Left lung (tissue), 14 donors: ENCODE measurements at regions of chr16 and their contacts with region 1.

Region 1: DNA sequence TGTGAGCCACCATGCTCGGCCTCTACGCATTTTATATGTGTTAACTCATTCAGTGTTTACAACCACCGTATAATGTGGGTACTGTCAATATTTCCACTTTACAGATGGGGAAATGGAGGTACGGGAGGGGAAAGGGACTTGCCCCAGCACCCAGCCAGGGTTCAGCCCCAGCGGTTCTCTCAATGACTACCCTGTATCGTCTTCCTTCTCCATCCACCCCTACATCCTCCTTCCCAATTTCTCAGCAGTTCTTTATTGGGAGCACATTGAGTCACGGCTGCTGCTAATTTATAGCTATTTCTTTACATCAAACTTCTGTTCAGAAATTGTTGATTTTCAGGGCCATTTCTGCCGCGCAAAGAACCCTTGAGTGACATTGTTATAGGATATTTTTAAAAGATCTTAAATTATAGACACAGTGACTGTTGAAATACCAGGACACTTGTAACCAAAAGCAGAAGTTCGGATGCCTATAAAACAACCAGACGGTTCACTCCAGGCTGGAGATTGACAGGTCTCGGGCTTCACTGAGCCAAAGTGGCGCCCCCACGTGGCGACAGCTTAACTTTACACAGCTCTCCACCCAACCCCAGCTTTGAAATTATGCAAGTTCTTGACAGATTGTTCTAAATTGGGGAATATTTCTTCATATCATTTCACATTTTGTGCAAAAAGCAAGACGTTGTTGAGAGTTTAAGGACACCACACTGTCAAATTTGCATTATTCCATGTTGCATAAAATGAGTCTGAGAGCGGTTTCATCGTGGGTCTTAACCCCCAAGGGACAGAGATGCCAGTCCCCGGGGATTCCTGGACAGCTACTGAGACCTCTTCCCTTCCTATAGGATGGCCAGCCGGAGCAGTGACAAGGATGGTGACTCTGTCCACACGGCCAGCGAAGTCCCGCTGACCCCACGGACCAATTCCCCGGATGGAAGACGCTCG is 11.8 kb downstream of the SYT17 start:
- DNase-seq: peak in 3 of 4 donors; percentile 48 to 87 (median 71)
- ATAC-seq: peak; percentile 73
- H3K4me3 ChIP-seq: no peak overlapping the region
- H3K27ac ChIP-seq: peak overlapping the region in 1 of 2 donors; percentile 4
- H3K4me1 ChIP-seq: peaks cover 16 to 35% of the 10 kb centered on the region in 2 donors
- H3K27me3 ChIP-seq: no peaks in the 10 kb centered on the region
- CTCF ChIP-seq: peak; percentile 57 to 76

Region 2: DNA sequence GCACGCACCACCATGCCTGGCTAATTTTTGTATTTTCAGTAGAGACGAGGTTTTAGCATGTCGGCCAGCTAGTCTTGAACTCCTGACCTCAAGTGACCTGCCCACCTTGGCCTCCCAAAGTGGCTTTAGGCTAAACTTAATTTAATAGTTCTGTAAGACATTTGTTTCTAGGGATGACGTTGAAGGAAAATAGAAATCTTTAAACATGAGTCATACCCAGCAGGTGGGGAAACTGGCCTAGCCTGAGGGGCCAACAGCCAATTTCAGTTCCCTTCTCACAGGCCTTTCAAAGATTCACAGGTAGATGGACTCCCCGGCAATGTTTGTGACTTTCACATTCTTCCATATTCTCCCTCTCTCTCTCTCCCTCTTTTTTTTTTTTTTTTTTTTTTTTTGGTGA is 84.2 kb before region 1 on chr16:
- intact Hi-C with region 1: no loop called
- DNase-seq: no peak
- ATAC-seq: no peak
- H3K4me3 ChIP-seq: no peak overlapping the region
- H3K27ac ChIP-seq: no peak overlapping the region
- H3K4me1 ChIP-seq: peaks cover 0 to 11% of the 10 kb centered on the region in 2 donors
- H3K27me3 ChIP-seq: no peaks in the 10 kb centered on the region
- CTCF ChIP-seq: no peak

Region 3: DNA sequence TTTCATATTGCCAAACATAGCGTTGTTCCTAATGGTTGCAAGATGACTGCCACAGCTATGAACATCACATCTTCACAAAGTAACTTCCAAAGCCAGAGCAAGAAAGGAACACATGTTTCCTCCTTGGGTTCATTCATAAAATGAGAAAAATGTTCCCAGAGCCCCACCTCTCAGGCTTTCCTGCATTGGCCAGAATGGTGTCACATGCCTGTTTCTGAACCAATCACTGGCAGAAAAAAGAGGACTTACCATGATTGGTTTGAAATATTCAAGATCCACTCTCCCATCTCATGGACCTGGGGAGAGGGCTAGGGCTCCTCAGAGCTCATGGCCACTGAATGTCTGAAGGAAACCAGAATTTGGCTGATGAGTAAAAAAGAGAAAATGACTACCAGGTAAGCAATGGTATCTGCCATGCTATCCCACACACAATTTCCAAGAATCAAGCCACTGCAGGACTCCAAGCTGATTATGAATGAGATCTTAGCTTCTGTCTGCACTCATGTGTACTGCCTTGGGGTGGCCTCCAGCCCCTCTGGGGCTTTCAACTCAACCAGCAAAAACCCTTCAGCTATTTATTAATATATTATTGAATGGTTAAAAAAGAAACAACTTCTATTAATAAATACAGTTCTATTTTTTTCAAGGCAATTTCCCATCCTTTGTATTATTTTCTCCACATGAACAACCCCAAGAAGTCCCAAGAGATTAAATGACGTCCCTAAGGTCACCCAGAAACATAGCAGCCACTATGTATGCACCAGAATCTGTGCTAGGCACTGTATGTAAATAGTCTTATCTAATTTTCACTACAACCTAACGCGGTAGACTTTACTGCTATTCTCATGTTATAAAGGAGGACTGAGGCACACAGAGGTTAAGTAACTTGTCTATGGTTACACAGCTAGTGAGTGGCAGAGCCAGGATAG is 176.5 kb after region 1 on chr16:
- intact Hi-C with region 1: loop called in 1 of 2 experiments (anchors 10 kb)
- DNase-seq: no peak
- ATAC-seq: no peak
- H3K4me3 ChIP-seq: no peak overlapping the region
- H3K27ac ChIP-seq: no peak overlapping the region
- H3K4me1 ChIP-seq: no peaks in the 10 kb centered on the region
- H3K27me3 ChIP-seq: no peaks in the 10 kb centered on the region
- CTCF ChIP-seq: no peak

Region 4: GRCh38 chr16:19437280-19437679 is 257.5 kb after region 1 on chr16:
- intact Hi-C with region 1: no loop called
- DNase-seq: no peak
- ATAC-seq: peak; percentile 58
- H3K4me3 ChIP-seq: no peak overlapping the region
- H3K27ac ChIP-seq: peak overlapping the region in 1 of 2 donors; percentile 7
- H3K4me1 ChIP-seq: peaks cover 4 to 8% of the 10 kb centered on the region in 2 donors
- H3K27me3 ChIP-seq: no peaks in the 10 kb centered on the region
- CTCF ChIP-seq: no peak